PC-9 (cell line): ENCODE measurements at regions of chr3 and their contacts with region 1.

Region 1: GRCh38 chr3:159418571-159419526 is 569.8 kb upstream of the IL12A start:
- DNase-seq: peak; percentile 73 to 91
- H3K4me3 ChIP-seq: no peak overlapping the region
- H3K27ac ChIP-seq: peak overlapping the region; percentile 82
- H3K4me1 ChIP-seq: peaks cover 26% of the 10 kb centered on the region
- H3K27me3 ChIP-seq: no peaks in the 10 kb centered on the region
- CTCF ChIP-seq: no peak

Region 2: GRCh38 chr3:159266779-159267178 is 152.1 kb before region 1 on chr3:
- CTCF ChIA-PET with region 1: no interaction called
- POLR2A ChIA-PET with region 1: no interaction called
- intact Hi-C with region 1: loop called (anchors 2 kb)
- DNase-seq: peak in 1 of 2 experiments; percentile 62
- H3K4me3 ChIP-seq: no peak overlapping the region
- H3K27ac ChIP-seq: no peak overlapping the region
- H3K4me1 ChIP-seq: no peaks in the 10 kb centered on the region
- H3K27me3 ChIP-seq: no peaks in the 10 kb centered on the region
- CTCF ChIP-seq: peak; percentile 67

Region 3: DNA sequence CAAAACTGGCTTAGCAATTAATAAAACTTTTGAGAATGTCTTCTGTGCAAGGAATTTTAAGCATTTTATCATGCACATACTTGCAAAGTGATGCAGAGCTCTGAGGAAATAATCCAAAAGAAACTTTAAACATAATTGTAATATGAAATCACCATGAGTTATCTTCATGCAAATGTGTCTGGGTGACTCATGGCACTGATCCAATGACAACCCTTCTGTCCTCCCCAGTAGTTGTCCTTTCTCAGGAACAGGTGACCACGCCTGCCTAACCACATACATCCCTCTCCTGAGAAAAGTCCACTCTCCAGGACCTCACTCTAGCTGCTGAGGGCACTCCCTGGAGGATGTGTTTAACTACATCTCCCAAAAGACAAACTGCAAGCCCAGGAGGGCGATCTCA is 39.2 kb after region 1 on chr3:
- CTCF ChIA-PET with region 1: no interaction called
- POLR2A ChIA-PET with region 1: interaction called, 7 read pairs
- intact Hi-C with region 1: loop called (anchors 1 kb)
- DNase-seq: peak; percentile 92 to 96
- H3K4me3 ChIP-seq: no peak overlapping the region
- H3K27ac ChIP-seq: peak overlapping the region; percentile 63
- H3K4me1 ChIP-seq: peaks cover 25% of the 10 kb centered on the region
- H3K27me3 ChIP-seq: no peaks in the 10 kb centered on the region
- CTCF ChIP-seq: no peak

Region 4: DNA sequence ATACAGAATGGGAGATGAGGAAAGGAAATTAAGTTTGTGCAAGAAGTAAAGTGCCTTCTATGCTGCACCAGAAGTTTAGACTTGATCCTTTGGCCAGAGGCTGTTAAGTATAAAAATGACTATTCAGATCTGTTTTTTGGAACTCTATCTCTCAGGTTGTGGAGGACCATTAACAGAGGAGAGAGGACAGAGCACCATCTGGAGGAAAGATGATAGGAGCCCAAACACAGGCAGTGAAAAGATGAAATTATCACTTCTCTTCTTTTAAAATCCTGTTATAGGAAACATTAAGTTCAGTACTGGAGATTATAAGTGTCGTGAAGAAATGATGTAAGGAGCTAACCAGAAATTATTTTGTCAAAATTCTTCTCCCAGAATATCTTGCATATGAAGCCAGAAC is 85.1 kb after region 1 on chr3:
- CTCF ChIA-PET with region 1: no interaction called
- POLR2A ChIA-PET with region 1: no interaction called
- intact Hi-C with region 1: no loop called
- DNase-seq: no peak
- H3K4me3 ChIP-seq: no peak overlapping the region
- H3K27ac ChIP-seq: no peak overlapping the region
- H3K4me1 ChIP-seq: no peaks in the 10 kb centered on the region
- H3K27me3 ChIP-seq: no peaks in the 10 kb centered on the region
- CTCF ChIP-seq: no peak

Region 5: DNA sequence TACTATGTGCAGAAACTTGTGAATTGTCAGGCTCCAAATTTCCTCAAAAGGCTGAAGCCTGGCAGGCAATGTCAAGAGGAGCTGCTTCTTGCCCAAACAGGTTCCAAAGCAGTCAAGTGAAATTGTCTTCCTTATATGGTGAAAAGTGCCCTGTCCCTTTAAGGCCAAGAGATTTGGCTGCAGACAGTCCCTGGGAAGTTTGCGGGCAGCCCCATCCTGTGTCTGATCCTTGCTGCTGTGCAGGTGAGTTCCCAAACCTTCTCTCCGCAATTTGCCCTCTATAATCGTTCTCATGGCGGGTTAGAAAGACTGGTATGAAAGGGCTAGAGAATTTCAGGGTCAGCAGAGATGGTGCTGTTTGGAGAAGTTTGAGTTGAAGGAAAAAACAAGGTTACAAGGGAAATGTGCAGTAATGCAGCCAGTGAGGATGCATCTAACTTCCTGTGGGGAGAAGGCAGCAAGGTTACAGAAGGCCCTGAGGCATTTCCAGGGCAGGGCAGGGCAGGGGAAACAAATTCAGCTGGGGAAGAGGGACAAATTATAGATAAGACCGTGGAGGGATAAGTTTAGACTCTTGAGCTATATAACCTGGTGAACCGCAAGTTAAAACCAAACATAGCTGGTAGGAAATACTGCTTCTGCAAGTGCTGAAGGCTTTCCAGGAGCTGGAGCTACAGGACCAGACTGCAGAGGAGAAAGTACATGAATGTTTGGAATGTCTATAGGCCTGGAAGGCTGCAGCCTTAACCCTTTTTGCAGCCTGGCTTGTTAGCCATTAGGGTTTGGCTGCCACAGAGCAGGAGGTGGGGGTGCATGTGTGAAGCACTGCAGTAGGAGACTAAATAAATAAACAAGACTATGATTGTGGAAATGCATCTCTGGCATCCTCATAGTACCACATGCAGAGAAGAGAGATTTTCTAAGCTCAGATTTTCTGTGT is 313.6 kb after region 1 on chr3:
- CTCF ChIA-PET with region 1: no interaction called
- POLR2A ChIA-PET with region 1: no interaction called
- intact Hi-C with region 1: loop called (anchors 2 kb)
- DNase-seq: peak; percentile 69 to 73
- H3K4me3 ChIP-seq: peak overlapping the region; percentile 38; the same call in 1 of the 2 replicates
- H3K27ac ChIP-seq: no peak overlapping the region
- H3K4me1 ChIP-seq: peaks cover 23% of the 10 kb centered on the region
- H3K27me3 ChIP-seq: no peaks in the 10 kb centered on the region
- CTCF ChIP-seq: no peak

Region 6: GRCh38 chr3:159813822-159814523 is 395.1 kb after region 1 on chr3:
- CTCF ChIA-PET with region 1: no interaction called
- POLR2A ChIA-PET with region 1: no interaction called
- intact Hi-C with region 1: loop called (anchors 5 kb)
- DNase-seq: peak; percentile 79 to 97
- H3K4me3 ChIP-seq: 0 out of 2 replicates have a peak overlapping the region, but pooled peaks have one; percentile 18
- H3K27ac ChIP-seq: peak overlapping the region; percentile 52
- H3K4me1 ChIP-seq: peaks cover 51% of the 10 kb centered on the region
- H3K27me3 ChIP-seq: no peaks in the 10 kb centered on the region
- CTCF ChIP-seq: no peak

Region 7: GRCh38 chr3:159914426-159914825 is 495.6 kb after region 1 on chr3:
- CTCF ChIA-PET with region 1: no interaction called
- POLR2A ChIA-PET with region 1: no interaction called
- intact Hi-C with region 1: no loop called
- DNase-seq: no peak
- H3K4me3 ChIP-seq: no peak overlapping the region
- H3K27ac ChIP-seq: no peak overlapping the region
- H3K4me1 ChIP-seq: peaks cover 4% of the 10 kb centered on the region; the same call in 1 of the 2 replicates
- H3K27me3 ChIP-seq: no peaks in the 10 kb centered on the region
- CTCF ChIP-seq: no peak

Region 8: GRCh38 chr3:159929435-159930141 is 510.7 kb after region 1 on chr3:
- CTCF ChIA-PET with region 1: no interaction called
- POLR2A ChIA-PET with region 1: interaction called, 3 read pairs
- intact Hi-C with region 1: loop called (anchors 2 kb)
- DNase-seq: peak; percentile 51 to 93
- H3K4me3 ChIP-seq: peak overlapping the region; percentile 27; the same call in 1 of the 2 replicates
- H3K27ac ChIP-seq: peak overlapping the region; percentile 94
- H3K4me1 ChIP-seq: peaks cover 46% of the 10 kb centered on the region
- H3K27me3 ChIP-seq: no peaks in the 10 kb centered on the region
- CTCF ChIP-seq: peak; percentile 62

Region 9: GRCh38 chr3:160399125-160400029 is 980.5 kb after region 1 on chr3 and contains the starts of genes IFT80 and SMC4:
- CTCF ChIA-PET with region 1: no interaction called
- POLR2A ChIA-PET with region 1: no interaction called
- intact Hi-C with region 1: loop called (anchors 5 kb)
- DNase-seq: peak; percentile 91 to 98
- H3K4me3 ChIP-seq: peak within 1 kb of the TSS; percentile 90
- H3K27ac ChIP-seq: peak within 1 kb of the TSS; percentile 67
- H3K4me1 ChIP-seq: peaks cover 32% of the 10 kb centered on the region
- H3K27me3 ChIP-seq: no peaks in the 10 kb centered on the region
- CTCF ChIP-seq: no peak
- total RNA-seq, gene IFT80: 47.9 and 59.4 TPM in 2 replicates
- total RNA-seq, gene SMC4: 138 and 181 TPM in 2 replicates